ENCODE measurements at regions of chr2 and their contacts with region 1.

Region 1: GRCh38 chr2:223101340-223102039 is 49.5 kb downstream of the KCNE4 start:
- DNase-seq: no peak
- ATAC-seq: no peak
- H3K4me3 Mint-ChIP-seq: no peak overlapping the region
- H3K27ac Mint-ChIP-seq: no peak overlapping the region
- H3K4me1 Mint-ChIP-seq: no peaks in the 10 kb centered on the region
- H3K27me3 Mint-ChIP-seq: peaks cover 2% of the 10 kb centered on the region
- CTCF ChIP-seq: no peak

Region 2: GRCh38 chr2:222976521-222977076 is 124.9 kb before region 1 on chr2:
- CTCF ChIA-PET with region 1: interaction called, 4 read pairs
- POLR2A ChIA-PET with region 1: no interaction called
- intact Hi-C with region 1: loop called (anchors 10 kb)
- DNase-seq: no peak
- ATAC-seq: no peak
- H3K4me3 Mint-ChIP-seq: no peak overlapping the region
- H3K27ac Mint-ChIP-seq: no peak overlapping the region
- H3K4me1 Mint-ChIP-seq: no peaks in the 10 kb centered on the region
- H3K27me3 Mint-ChIP-seq: peaks cover 5% of the 10 kb centered on the region
- CTCF ChIP-seq: no peak